Panc1 (cell line): ENCODE measurements at regions of chr18 and their contacts with region 1.

Region 1: GRCh38 chr18:32974421-32975162 is 201.8 kb upstream of the KLHL14 start:
- DNase-seq: no peak
- ATAC-seq: no peak
- H3K4me3 ChIP-seq: no peak overlapping the region
- H3K27ac ChIP-seq: no peak overlapping the region
- H3K4me1 ChIP-seq: no peaks in the 10 kb centered on the region
- H3K27me3 ChIP-seq: no peaks in the 10 kb centered on the region
- CTCF ChIP-seq: no peak

Region 2: DNA sequence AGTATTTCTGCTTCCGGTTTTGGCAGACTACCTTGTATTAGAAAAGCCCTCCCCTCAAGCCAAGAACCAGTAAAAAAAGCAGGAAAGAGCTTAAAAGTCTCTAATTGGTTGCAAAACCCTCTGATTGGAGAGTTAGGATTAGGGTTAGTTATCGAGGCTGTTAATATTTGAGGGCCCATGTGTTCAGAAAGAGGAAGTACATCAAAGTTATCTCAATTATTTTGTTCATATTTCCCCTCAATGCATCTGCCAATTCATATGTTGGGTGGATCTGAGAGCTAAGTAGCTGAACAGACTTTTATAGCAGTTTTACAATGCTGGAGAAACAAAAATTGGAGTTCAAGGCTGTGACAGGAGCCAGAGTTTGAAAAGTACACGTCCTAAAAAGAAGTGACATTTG is 158.7 kb before region 1 on chr18:
- CTCF ChIA-PET with region 1: no interaction called
- POLR2A ChIA-PET with region 1: no interaction called
- in situ Hi-C with region 1: no loop called
- intact Hi-C with region 1: no loop called
- DNase-seq: no peak
- ATAC-seq: no peak
- H3K4me3 ChIP-seq: no peak overlapping the region
- H3K27ac ChIP-seq: no peak overlapping the region
- H3K4me1 ChIP-seq: no peaks in the 10 kb centered on the region
- H3K27me3 ChIP-seq: no peaks in the 10 kb centered on the region
- CTCF ChIP-seq: no peak

Region 3: GRCh38 chr18:32956591-32957315 is 17.8 kb before region 1 on chr18:
- CTCF ChIA-PET with region 1: no interaction called
- POLR2A ChIA-PET with region 1: no interaction called
- in situ Hi-C with region 1: no loop called
- intact Hi-C with region 1: no loop called
- DNase-seq: peak; percentile 60
- ATAC-seq: 0 out of 2 replicates have a peak, but pooled peaks have one; percentile 71
- H3K4me3 ChIP-seq: no peak overlapping the region
- H3K27ac ChIP-seq: no peak overlapping the region
- H3K4me1 ChIP-seq: no peaks in the 10 kb centered on the region
- H3K27me3 ChIP-seq: no peaks in the 10 kb centered on the region
- CTCF ChIP-seq: peak; percentile 32; the same call in 1 of the 2 replicates

Region 4: DNA sequence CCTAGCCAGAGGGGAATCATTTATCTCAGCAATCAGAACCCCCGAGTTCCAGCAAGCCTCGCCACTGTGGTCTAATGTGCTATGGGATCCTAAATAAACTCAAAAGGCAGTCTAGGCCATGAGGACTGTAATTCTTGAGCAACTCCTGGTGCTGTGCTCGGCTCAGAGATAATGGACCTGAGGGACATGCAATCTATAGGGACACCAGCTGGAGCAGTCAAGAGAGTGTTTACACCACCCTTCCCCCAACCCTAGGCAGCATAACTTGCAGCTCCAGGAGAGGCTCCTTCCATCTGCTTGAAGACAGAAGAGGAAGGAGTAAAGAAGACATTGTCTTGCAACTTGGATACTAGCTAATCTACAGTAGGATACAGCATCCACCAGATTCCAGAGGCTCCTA is 23.7 kb after region 1 on chr18:
- CTCF ChIA-PET with region 1: no interaction called
- POLR2A ChIA-PET with region 1: no interaction called
- in situ Hi-C with region 1: no loop called
- intact Hi-C with region 1: no loop called
- DNase-seq: no peak
- ATAC-seq: no peak
- H3K4me3 ChIP-seq: no peak overlapping the region
- H3K27ac ChIP-seq: no peak overlapping the region
- H3K4me1 ChIP-seq: no peaks in the 10 kb centered on the region
- H3K27me3 ChIP-seq: no peaks in the 10 kb centered on the region
- CTCF ChIP-seq: no peak

Region 5: DNA sequence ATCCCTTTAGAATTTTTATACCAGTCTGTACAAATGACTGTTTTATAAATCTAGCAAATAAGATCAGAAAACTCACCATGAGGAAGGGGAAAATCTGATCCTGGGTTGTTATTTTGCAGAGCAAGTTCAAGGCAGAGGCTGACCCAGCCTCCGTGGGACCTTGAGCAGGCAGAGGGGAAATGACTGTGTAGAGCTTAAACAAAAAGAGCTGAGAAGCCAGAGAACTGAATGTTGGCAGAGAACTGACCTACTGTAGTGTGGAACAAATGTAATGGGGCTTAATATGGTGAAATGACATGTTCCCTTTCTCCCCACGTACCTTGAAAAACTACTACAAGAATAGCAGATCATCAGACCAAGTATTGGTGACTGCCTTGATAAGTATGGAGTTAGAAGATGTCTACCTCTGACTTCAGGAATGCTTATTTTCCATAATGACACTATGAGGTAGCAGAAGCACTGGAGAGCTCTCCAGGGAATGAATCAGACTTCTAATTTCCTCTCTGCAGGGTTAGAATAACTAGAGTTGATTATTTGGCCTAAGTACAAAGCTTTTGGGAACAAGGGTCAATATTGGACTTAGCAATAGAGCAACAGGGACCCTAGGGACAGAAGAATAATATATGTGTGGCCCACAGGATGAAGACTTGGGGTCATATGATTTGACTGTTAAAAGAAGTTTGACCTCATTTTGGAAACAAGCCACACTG is 161.5 kb after region 1 on chr18:
- CTCF ChIA-PET with region 1: no interaction called
- POLR2A ChIA-PET with region 1: interaction called, 11 read pairs
- in situ Hi-C with region 1: no loop called
- intact Hi-C with region 1: no loop called
- DNase-seq: no peak
- ATAC-seq: no peak
- H3K4me3 ChIP-seq: no peak overlapping the region
- H3K27ac ChIP-seq: 0 out of 2 replicates have a peak overlapping the region, but pooled peaks have one; percentile 17
- H3K4me1 ChIP-seq: no peaks in the 10 kb centered on the region
- H3K27me3 ChIP-seq: no peaks in the 10 kb centered on the region
- CTCF ChIP-seq: no peak